HepG2 (cell line): ENCODE measurements at regions of chr5 and their contacts with region 1.

Region 1: GRCh38 chr5:175729829-175730277 is 72.0 kb downstream of the HRH2 start:
- DNase-seq: peak; percentile 83
- ATAC-seq: peak; percentile 97
- H3K4me3 ChIP-seq: peak overlapping the region in 1 of 3 experiments; percentile 23; a peak in 1 of 6 replicates
- H3K27ac ChIP-seq: no peak overlapping the region
- H3K4me1 ChIP-seq: peaks cover 11% of the 10 kb centered on the region; the same call in 1 of the 2 replicates
- H3K27me3 ChIP-seq: 0 out of 5 replicates have a peak, but pooled peaks cover 1 to 3% of the 10 kb centered on the region in 2 experiments
- CTCF ChIP-seq: peak; percentile 99
- EP300 ChIP-seq: no peak
- POLR2A ChIP-seq: no peak
- RAD21 ChIP-seq: peak; percentile 99

Region 2: GRCh38 chr5:175681045-175681967 is 48.5 kb before region 1 on chr5:
- CTCF ChIA-PET with region 1: no interaction called
- POLR2A ChIA-PET with region 1: no interaction called
- in situ Hi-C with region 1: no loop called
- intact Hi-C with region 1: no loop called
- DNase-seq: no peak
- ATAC-seq: no peak
- H3K4me3 ChIP-seq: no peak overlapping the region
- H3K27ac ChIP-seq: no peak overlapping the region
- H3K4me1 ChIP-seq: no peaks in the 10 kb centered on the region
- H3K27me3 ChIP-seq: peaks cover 3 to 50% of the 10 kb centered on the region in 2 experiments; a peak in 4 of 5 replicates
- CTCF ChIP-seq: no peak
- EP300 ChIP-seq: no peak
- POLR2A ChIP-seq: no peak
- RAD21 ChIP-seq: no peak

Region 3: GRCh38 chr5:175696139-175696854 is 33.6 kb before region 1 on chr5:
- CTCF ChIA-PET with region 1: no interaction called
- POLR2A ChIA-PET with region 1: no interaction called
- in situ Hi-C with region 1: no loop called
- intact Hi-C with region 1: no loop called
- DNase-seq: no peak
- ATAC-seq: no peak; the same call in 2 of the 3 replicates
- H3K4me3 ChIP-seq: no peak overlapping the region
- H3K27ac ChIP-seq: no peak overlapping the region
- H3K4me1 ChIP-seq: peaks cover 25% of the 10 kb centered on the region
- H3K27me3 ChIP-seq: 0 out of 5 replicates have a peak, but pooled peaks cover 0 to 9% of the 10 kb centered on the region in 2 experiments
- CTCF ChIP-seq: peak; percentile 54
- EP300 ChIP-seq: no peak
- POLR2A ChIP-seq: no peak
- RAD21 ChIP-seq: no peak

Region 4: DNA sequence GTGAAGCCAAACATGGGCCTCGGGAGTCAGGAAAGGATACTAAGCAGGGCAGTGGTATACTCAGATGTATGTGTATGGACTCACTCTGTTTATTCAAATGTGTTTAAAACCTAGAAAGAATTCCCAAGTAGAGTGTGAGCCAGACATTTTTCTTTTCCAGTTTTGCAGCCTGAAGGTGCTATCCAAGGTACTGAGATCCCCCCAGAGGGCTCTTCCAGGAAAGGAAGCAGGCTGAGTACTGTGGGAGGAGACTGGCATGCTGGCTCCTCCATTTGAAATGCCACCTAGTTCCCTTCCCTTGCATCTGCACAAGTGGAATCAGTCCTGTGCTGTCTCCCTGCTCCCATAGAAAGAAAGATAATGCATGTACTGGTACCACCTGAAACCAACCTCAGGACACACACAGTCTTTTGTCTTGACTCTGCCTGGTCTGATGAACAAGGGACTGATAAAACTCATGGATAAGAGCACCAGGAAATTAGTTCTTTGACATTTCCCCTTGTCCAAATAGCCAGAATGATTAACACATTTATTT is 13.9 kb after region 1 on chr5:
- CTCF ChIA-PET with region 1: no interaction called
- POLR2A ChIA-PET with region 1: no interaction called
- in situ Hi-C with region 1: no loop called
- intact Hi-C with region 1: no loop called
- DNase-seq: no peak
- ATAC-seq: no peak
- H3K4me3 ChIP-seq: no peak overlapping the region
- H3K27ac ChIP-seq: no peak overlapping the region
- H3K4me1 ChIP-seq: peaks cover 11% of the 10 kb centered on the region; the same call in 1 of the 2 replicates
- H3K27me3 ChIP-seq: peaks cover 0 to under 1% of the 10 kb centered on the region in 2 experiments; a peak in 1 of 5 replicates
- CTCF ChIP-seq: no peak
- EP300 ChIP-seq: no peak
- POLR2A ChIP-seq: no peak
- RAD21 ChIP-seq: no peak

Region 5: DNA sequence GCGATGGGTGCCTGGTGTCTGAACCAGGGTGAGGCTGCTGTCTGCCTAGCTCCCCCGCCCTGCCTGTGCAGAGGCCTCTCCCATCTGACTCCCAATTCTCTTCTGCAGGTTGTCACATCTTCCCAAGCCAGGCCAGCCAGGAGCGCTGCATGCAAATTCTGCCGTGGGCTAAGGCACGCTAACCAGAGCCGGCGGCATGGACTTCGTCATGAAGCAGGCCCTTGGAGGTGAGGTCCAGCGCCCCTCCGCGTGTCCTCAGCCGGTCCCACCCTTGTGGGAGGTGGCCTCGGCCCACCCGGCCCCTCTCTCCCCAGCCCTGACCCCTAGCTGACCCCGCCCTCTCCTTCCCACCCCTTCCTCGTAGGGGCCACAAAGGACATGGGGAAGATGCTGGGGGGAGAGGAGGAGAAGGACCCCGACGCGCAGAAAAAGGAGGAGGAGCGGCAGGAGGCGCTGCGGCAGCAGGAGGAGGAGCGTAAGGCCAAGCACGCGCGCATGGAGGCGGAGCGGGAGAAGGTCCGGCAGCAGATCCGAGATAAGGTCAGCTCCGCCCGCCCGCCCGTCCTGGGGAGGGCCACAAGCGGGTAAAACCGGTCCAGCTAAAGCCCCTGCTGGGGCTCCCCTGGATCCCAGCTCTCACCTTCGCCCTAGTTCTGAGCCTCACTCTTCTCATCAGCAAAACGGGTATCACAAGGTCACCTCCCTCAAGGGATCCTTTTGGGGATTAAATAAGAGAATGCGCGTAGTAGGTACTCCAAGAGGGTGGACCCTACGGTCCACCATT is 148.9 kb after region 1 on chr5:
- CTCF ChIA-PET with region 1: interaction called, 17 read pairs
- POLR2A ChIA-PET with region 1: no interaction called
- in situ Hi-C with region 1: loop called (anchors 5 kb)
- intact Hi-C with region 1: loop called (anchors 2 kb)
- DNase-seq: no peak
- ATAC-seq: no peak
- H3K4me3 ChIP-seq: no peak overlapping the region
- H3K27ac ChIP-seq: no peak overlapping the region
- H3K4me1 ChIP-seq: peaks cover 56% of the 10 kb centered on the region
- H3K27me3 ChIP-seq: no peaks in the 10 kb centered on the region
- CTCF ChIP-seq: no peak
- EP300 ChIP-seq: no peak
- POLR2A ChIP-seq: no peak; a peak in 1 of 4 replicates
- RAD21 ChIP-seq: no peak

Region 6: DNA sequence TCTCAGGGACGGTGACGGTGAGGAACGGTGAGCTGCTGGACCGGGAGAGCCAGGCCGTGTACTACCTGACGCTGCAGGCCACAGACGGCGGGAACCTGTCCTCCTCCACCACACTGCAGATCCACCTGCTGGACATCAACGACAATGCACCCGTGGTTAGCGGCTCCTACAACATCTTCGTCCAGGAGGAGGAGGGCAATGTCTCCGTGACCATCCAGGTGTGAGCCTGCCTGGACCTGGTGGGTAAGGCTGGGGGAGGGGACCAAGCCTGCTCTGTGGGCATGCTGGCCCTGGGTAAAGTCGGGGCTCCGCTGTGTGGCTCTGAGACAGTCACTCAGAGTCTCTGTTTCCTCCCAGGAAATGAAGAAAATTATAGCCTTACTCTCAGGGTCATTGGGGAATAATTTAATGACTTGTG is 848.5 kb after region 1 on chr5:
- CTCF ChIA-PET with region 1: no interaction called
- POLR2A ChIA-PET with region 1: no interaction called
- in situ Hi-C with region 1: loop called (anchors 25 kb)
- intact Hi-C with region 1: no loop called
- DNase-seq: peak; percentile 45
- ATAC-seq: peak; percentile 65
- H3K4me3 ChIP-seq: no peak overlapping the region
- H3K27ac ChIP-seq: no peak overlapping the region
- H3K4me1 ChIP-seq: no peaks in the 10 kb centered on the region
- H3K27me3 ChIP-seq: no peaks in the 10 kb centered on the region
- CTCF ChIP-seq: peak; percentile 55
- EP300 ChIP-seq: no peak
- POLR2A ChIP-seq: no peak
- RAD21 ChIP-seq: no peak

Region 7: DNA sequence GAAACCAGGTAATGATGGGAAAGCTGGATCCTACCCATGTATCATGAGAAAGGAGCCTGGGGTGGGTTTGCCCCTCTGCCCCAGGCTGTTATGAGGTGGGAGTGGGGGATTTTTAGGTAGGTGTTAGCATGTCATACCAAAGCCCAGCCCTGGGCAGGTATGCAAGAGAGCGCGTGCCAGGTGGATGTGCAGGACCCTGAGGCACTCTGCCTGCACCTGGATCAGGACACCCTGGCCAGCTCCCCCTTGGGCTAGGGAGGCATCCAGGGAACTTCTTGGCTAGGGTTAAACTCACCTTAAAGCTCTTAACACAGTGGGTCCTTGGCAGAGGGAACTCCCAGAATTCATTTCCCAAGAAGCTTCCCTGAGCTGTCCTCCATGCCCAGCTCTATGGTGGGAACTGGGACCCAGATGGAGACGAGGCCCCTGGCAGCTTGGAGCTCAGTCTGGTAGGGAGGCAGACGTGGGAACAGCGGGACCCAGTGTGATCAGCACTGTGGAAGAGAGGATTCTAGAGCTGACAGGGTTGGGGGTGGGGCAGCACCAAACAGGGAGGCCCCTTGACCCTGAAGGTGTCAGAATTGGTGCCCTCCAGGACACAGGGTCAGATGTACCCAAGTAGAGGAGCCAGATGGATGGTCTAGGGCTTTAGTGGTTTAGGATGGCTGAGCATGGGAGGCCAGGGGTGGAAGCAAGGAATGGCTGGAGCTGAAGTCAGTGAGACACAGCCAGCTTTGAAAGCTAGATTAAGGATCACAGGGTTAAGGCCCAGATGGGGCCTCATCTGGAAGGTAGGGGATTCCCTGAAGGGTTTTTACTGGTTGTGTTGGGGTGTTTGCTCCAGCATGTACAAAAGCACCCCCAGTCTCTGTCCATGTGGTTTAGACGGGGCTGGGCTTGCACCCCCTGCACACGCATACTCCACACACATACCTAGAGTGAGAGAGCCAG is 1714.5 kb after region 1 on chr5:
- CTCF ChIA-PET with region 1: no interaction called
- POLR2A ChIA-PET with region 1: no interaction called
- in situ Hi-C with region 1: no loop called
- intact Hi-C with region 1: no loop called
- DNase-seq: no peak
- ATAC-seq: no peak
- H3K4me3 ChIP-seq: no peak overlapping the region
- H3K27ac ChIP-seq: no peak overlapping the region
- H3K4me1 ChIP-seq: peaks cover 41% of the 10 kb centered on the region
- H3K27me3 ChIP-seq: no peaks in the 10 kb centered on the region
- CTCF ChIP-seq: no peak
- EP300 ChIP-seq: no peak
- POLR2A ChIP-seq: no peak
- RAD21 ChIP-seq: no peak